H1 (cell line): ENCODE measurements at regions of chrX and their contacts with region 1.

Region 1: DNA sequence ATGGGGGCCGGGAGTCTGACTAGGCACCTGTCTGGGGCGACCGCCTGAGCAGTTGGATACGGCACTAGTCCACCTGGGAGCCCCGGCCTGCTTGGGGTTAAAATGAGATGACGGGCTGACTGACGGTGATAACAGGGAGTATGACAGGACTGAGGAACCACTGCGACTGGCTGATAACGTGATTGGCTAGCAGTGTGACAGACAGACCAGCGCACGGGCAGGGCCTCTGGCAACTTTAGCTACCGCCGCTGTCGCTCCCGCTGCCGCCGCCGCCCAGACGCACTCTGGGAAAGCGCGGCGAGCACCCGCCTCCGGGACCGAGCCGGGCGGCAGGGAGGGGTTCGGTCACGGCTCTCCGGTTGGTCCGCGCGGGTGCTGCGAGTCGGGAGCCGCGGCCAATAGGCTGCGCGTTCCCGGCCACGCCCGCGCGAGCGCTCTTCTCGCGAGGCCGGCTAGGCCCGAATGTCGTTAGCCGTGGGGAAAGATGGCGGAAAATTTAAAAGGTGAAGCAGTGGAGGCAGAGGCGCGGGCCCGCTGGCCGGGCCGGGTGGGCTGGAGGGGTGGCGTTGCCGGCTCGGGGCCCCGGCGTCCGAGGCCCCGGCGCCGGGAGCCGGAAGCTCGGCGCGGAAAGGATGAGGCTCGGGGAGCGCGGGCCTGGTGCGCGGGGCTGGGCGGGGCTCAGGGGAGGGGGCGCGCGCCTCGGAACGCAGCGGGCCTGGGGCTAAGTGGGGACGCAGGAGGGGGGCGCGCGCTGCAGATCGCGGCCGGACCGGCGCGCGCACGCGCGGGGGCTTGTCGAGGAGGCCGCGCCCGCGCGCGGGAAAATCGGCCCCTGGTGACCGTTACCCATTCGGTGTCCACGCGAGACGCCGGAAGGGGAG is at the start of gene SUV39H1:
- DNase-seq: peak in 1 of 2 experiments; percentile 67
- H3K4me3 ChIP-seq: peak within 1 kb of the TSS; percentile 65 to 84 (median 68)
- H3K27ac ChIP-seq: peak within 1 kb of the TSS; percentile 73; the same call in 1 of the 2 replicates
- H3K4me1 ChIP-seq: peaks cover 0 to 19% (median 7%) of the 10 kb centered on the region in 4 experiments; a peak in 6 of 7 replicates
- H3K27me3 ChIP-seq: no peaks in the 10 kb centered on the region; a peak in 1 of 7 replicates
- CTCF ChIP-seq: no peak
- EP300 ChIP-seq: no peak
- POLR2A ChIP-seq: peak; percentile 51 to 66
- RAD21 ChIP-seq: no peak
- total RNA-seq, gene SUV39H1: 14.1 and 14.8 TPM in 2 replicates

Region 2: GRCh38 chrX:48676106-48676892 is 20.2 kb before region 1 on chrX:
- CTCF ChIA-PET with region 1: no interaction called
- POLR2A ChIA-PET with region 1: interaction called, 16 read pairs
- DNase-seq: peak; percentile 76 to 83
- H3K4me3 ChIP-seq: peak overlapping the region; percentile 70 to 88 (median 78)
- H3K27ac ChIP-seq: peak overlapping the region; percentile 67; the same call in 1 of the 2 replicates
- H3K4me1 ChIP-seq: peaks cover 0 to 3% (median 0%) of the 10 kb centered on the region in 4 experiments; a peak in 1 of 7 replicates
- H3K27me3 ChIP-seq: no peaks in the 10 kb centered on the region
- CTCF ChIP-seq: no peak
- EP300 ChIP-seq: no peak
- POLR2A ChIP-seq: peak in 1 of 2 experiments; percentile 63; a peak in 2 of 3 replicates
- RAD21 ChIP-seq: no peak

Region 3: DNA sequence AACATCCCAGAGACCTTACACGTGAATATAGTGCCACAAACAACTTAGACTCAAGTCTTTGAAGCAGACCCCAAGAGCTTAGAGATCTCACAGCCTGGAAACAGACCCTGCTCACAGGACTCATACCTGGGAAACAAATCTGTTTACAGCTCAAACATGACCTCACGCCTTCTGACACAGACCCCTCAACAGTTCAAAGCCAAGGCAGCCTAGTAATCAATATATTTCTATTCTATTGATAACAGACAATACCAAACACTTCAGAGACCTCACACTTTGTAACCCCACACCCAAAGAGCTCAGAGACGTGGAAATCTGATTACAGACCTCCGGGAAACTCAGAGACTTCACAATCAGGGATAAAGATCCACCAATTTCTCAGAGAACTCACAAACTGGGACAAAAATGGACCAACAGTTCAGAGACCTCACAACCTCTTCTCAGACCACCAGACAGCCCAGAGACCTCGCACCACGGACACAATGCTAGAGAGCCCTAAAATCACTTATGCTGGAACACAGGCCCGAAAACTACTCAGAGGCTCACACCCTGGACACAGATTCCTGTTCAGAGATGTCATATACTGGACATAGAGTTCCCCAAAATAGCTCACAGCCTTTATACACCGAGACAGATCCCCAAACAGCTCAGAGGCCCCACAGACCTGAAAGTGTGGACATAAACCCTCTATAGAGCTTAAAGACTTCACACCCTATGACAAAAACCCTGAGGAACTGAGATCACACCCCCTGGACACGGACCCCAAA is 14.8 kb after region 1 on chrX:
- CTCF ChIA-PET with region 1: no interaction called
- POLR2A ChIA-PET with region 1: interaction called, 29 read pairs
- DNase-seq: no peak
- H3K4me3 ChIP-seq: no peak overlapping the region
- H3K27ac ChIP-seq: no peak overlapping the region
- H3K4me1 ChIP-seq: no peaks in the 10 kb centered on the region
- H3K27me3 ChIP-seq: no peaks in the 10 kb centered on the region; a peak in 3 of 7 replicates
- CTCF ChIP-seq: no peak
- EP300 ChIP-seq: no peak
- POLR2A ChIP-seq: no peak
- RAD21 ChIP-seq: no peak